Heart right ventricle (tissue), 16 donors: ENCODE measurements at regions of chr11 and their contacts with region 1.

Region 1: GRCh38 chr11:5123802-5124521 is 14.2 kb downstream of the OR52A5 start:
- DNase-seq: peak; percentile 18 to 54
- ATAC-seq: peak in 5 of 8 donors; percentile 47 to 70 (median 59)
- H3K4me3 ChIP-seq: no peak overlapping the region
- H3K27ac ChIP-seq: no peak overlapping the region
- H3K4me1 ChIP-seq: no peaks in the 10 kb centered on the region
- H3K27me3 ChIP-seq: peaks cover 0 to 11% (median 0%) of the 10 kb centered on the region in 7 donors
- CTCF ChIP-seq: peak; percentile 49 to 83 (median 72)

Region 2: DNA sequence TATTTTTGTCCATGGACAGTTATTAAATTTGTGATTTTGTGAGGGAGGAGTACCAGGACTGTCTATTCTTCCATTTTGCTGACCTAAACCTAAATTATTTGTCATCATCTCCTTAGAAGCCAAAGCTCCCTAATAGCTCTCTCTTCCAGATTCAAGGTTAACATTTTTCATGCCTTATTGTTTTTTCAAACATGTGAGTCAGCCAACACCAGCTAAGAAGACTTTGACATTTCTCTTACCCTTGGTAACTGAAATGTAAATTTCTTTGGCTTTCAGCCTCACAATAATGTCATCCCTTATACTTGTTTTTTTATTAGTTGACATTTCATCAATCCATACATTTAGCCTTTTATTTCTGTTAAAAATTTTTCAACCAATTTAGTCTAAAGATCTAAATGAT is 35.4 kb before region 1 on chr11:
- intact Hi-C with region 1: no loop called
- DNase-seq: no peak
- ATAC-seq: no peak
- H3K4me3 ChIP-seq: no peak overlapping the region
- H3K27ac ChIP-seq: no peak overlapping the region
- H3K4me1 ChIP-seq: no peaks in the 10 kb centered on the region
- H3K27me3 ChIP-seq: no peaks in the 10 kb centered on the region
- CTCF ChIP-seq: no peak

Region 3: GRCh38 chr11:5151713-5152153 is 27.8 kb after region 1 on chr11:
- intact Hi-C with region 1: no loop called
- DNase-seq: no peak
- ATAC-seq: no peak
- H3K4me3 ChIP-seq: no peak overlapping the region
- H3K27ac ChIP-seq: no peak overlapping the region
- H3K4me1 ChIP-seq: no peaks in the 10 kb centered on the region
- H3K27me3 ChIP-seq: no peaks in the 10 kb centered on the region
- CTCF ChIP-seq: no peak

Region 4: DNA sequence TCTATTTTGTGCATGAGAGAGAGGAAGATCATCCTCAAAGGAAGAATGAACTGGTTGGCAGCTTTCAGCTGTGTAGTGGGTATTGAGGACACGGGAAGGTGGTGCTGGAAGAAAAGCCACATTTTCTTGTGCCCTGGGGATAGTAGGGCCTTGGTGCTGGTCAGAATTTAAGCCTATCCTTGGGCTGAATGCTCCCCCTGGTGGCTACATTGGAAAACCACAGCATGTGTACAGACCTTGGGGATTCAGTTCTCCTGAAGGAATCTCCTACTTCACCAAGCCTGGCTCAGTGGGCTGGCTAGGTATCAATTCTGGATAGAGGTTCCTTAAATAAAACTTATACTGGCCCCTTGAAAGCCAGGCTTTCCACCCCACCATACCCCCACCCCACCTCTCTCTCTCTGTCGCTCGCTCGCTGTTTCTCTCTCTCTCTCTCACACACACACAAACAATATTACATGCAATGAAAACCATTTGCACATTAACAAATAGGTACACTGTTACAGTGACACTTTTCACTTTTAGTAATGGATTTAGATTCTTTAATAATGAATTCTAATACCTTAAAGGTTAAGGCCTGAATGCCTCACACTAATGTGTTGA is 256.9 kb after region 1 on chr11:
- intact Hi-C with region 1: loop called in 8 of 10 experiments (anchors 1 to 10 kb)
- DNase-seq: peak in 1 of 2 donors; percentile 32
- ATAC-seq: peak in 5 of 8 donors; percentile 52 to 75 (median 66)
- H3K4me3 ChIP-seq: no peak overlapping the region
- H3K27ac ChIP-seq: no peak overlapping the region
- H3K4me1 ChIP-seq: no peaks in the 10 kb centered on the region
- H3K27me3 ChIP-seq: no peaks in the 10 kb centered on the region
- CTCF ChIP-seq: peak; percentile 25 to 73 (median 62)

Region 5: DNA sequence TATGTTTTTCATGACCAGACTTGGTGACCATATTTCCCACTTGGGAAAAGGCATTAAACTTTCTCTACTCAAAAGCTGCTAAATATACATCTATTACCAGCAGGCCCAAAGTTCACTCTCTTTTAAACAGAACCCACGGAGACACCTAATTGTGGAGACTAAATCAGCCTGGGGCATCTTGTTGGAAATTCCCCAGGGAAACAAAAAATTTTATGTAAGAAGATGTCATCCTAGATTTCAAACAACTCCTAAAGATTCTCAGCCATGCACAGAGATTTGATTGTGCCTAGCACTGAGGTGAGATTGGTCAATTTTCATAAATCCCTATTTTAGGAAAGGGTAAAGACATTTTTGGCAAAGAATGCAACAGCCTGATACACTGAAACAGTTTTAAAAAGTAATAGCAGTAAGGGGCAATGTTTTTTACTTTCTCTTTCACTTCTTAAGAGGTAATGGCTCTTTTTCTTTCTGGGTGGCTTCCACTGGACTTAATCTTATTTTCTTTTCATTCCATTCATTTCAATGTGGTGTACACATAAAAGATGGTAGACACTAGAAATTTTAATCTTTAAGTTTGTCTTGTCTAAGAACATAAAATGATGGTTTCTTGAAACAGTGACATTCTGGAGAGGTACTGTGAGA is 694.4 kb after region 1 on chr11:
- intact Hi-C with region 1: loop called in 2 of 10 experiments (anchors 10 kb)
- DNase-seq: no peak
- ATAC-seq: no peak
- H3K4me3 ChIP-seq: peak overlapping the region in 2 of 10 donors; percentile 6 to 8
- H3K27ac ChIP-seq: no peak overlapping the region
- H3K4me1 ChIP-seq: peaks cover 0 to 16% (median 0%) of the 10 kb centered on the region in 9 donors
- H3K27me3 ChIP-seq: peaks cover 0 to 4% (median 0%) of the 10 kb centered on the region in 7 donors
- CTCF ChIP-seq: no peak